ENCODE measurements at regions of chr13 and their contacts with region 1.

Region 1: DNA sequence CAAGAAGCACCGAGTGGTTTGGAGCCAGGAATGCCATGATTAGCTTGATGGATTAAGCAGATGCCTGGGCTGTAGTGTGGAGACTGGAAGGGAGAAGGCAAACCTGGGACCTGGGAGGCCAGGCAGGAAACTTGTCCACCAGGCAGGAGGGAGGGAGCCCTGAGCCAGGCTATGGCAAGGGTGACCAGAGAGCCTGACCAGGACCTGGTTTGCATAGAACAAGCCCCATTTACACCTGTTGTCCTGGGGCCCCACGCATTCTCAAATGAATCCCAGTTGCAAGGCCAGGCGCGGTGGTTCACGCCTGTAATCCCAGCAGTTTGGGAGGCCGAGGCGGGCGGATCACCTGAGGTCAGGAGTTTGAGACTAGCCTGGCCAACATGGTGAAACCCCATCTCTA is 50.2 kb upstream of the LATS2 start:
- DNase-seq: no peak
- H3K4me3 Mint-ChIP-seq: no peak overlapping the region
- H3K27ac Mint-ChIP-seq: no peak overlapping the region
- H3K4me1 Mint-ChIP-seq: no peaks in the 10 kb centered on the region
- H3K27me3 Mint-ChIP-seq: no peaks in the 10 kb centered on the region
- CTCF ChIP-seq: no peak

Region 2: DNA sequence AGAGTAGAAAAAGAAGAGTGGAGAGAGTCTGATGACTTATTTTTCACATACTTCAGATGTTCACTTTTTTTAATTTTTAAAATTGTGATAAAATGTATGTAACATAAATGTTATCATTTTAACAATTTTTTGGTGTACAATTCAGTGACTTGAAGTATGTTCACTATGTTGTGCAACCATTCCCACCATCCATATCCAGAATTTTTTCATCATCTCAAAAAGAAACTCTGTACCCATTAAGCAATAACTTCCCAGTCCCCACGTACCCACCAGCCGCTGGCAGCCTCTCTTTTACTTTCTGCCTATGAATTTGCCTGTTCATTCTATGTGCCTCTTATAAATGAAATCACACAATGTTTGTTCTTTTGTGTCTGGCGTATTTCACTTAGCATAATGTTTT is 21.5 kb after region 1 on chr13:
- CTCF ChIA-PET with region 1: interaction called, 4 read pairs
- POLR2A ChIA-PET with region 1: no interaction called
- intact Hi-C with region 1: loop called (anchors 2 kb)
- DNase-seq: no peak
- H3K4me3 Mint-ChIP-seq: no peak overlapping the region
- H3K27ac Mint-ChIP-seq: no peak overlapping the region
- H3K4me1 Mint-ChIP-seq: peaks cover 8% of the 10 kb centered on the region
- H3K27me3 Mint-ChIP-seq: no peaks in the 10 kb centered on the region
- CTCF ChIP-seq: no peak

Measured in MCF 10A (cell line).